SK-N-SH (cell line): ENCODE measurements at regions of chr9 and their contacts with region 1.

Region 1: GRCh38 chr9:109411798-109412352 is 86.2 kb downstream of the PTPN3 start:
- DNase-seq: peak; percentile 44
- H3K4me3 ChIP-seq: no peak overlapping the region
- H3K27ac ChIP-seq: no peak overlapping the region
- H3K4me1 ChIP-seq: no peaks in the 10 kb centered on the region
- H3K27me3 ChIP-seq: no peaks in the 10 kb centered on the region
- CTCF ChIP-seq: peak; percentile 65
- EP300 ChIP-seq: no peak
- RAD21 ChIP-seq: peak; percentile 67

Region 2: DNA sequence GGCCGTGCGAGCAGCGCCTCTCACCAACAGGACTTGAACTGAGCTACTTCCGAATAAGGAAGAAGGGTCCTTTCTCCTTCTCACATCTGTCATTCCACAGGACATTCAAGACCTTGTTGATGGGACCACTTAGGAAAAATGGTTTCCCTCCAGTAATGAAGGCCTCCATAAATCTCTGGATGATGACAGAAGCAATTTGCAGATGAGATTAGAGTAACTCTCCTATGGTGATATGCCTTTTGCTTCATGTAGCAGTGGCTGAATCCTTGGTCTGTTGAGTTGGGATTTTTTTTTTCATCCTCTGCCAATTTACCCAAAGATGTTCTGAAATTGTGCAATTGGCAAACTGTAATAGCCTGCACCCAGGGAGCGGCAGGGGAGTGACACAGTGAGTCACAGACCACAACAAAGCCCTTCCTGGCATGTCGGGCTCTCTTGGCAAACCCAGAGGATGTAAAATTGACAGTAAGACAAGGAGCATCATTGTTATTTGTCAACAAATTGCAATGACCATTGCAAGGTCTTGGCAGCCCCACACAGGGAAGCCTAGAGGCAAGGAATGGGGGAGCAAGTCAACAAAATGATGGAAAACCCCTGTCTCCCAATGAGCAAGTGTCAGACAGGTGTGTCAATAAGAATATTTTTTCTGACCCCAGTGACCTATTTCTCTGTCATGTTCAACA is 832.0 kb before region 1 on chr9:
- CTCF ChIA-PET with region 1: no interaction called
- POLR2A ChIA-PET with region 1: no interaction called
- DNase-seq: no peak
- H3K4me3 ChIP-seq: no peak overlapping the region
- H3K27ac ChIP-seq: no peak overlapping the region
- H3K4me1 ChIP-seq: no peaks in the 10 kb centered on the region
- H3K27me3 ChIP-seq: peaks cover 31% of the 10 kb centered on the region; the same call in 1 of the 2 replicates
- CTCF ChIP-seq: no peak
- EP300 ChIP-seq: no peak
- RAD21 ChIP-seq: no peak

Region 3: DNA sequence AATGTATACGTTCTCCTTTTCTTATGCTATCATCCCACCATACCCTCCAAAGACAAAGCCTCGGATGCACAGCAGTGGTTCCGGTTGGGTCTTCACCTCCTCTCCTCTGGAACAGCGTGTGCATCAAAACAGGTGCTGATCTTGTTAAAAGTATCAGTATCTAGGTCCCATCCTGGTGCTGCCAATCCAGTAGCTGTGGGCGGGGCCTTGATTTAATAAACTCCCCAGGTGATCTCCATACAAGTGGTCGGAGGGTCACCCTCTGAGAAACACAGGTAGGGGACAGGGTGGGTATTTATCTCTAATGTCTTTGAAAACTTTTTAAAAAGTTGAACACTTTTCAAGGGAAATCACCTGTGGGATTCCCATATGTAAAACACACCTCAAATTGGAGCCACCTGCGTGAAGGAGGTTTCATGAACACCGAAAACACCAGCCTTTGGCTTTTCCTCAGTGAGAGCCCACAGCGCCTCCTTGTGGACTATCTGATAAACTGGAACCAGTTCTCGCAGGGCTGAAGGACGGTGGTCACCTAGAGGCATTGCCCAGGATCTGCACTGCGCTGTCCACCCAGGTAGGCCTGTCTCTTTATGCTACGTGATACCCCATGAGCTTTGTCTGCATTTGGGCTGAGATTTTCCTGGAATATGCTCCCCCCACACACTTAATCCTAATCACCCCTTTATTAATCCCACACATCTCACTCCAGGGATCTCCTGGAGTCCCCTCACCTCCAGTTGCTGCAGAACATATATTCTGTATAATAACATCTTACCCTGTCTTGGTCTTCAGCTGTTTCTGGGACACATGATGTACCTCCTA is 10.5 kb before region 1 on chr9:
- CTCF ChIA-PET with region 1: interaction called, 28 read pairs
- POLR2A ChIA-PET with region 1: no interaction called
- DNase-seq: peak; percentile 68
- H3K4me3 ChIP-seq: no peak overlapping the region; a peak in 1 of 4 replicates
- H3K27ac ChIP-seq: no peak overlapping the region
- H3K4me1 ChIP-seq: no peaks in the 10 kb centered on the region
- H3K27me3 ChIP-seq: no peaks in the 10 kb centered on the region
- CTCF ChIP-seq: peak; percentile 84
- EP300 ChIP-seq: no peak
- RAD21 ChIP-seq: peak; percentile 72

Region 4: DNA sequence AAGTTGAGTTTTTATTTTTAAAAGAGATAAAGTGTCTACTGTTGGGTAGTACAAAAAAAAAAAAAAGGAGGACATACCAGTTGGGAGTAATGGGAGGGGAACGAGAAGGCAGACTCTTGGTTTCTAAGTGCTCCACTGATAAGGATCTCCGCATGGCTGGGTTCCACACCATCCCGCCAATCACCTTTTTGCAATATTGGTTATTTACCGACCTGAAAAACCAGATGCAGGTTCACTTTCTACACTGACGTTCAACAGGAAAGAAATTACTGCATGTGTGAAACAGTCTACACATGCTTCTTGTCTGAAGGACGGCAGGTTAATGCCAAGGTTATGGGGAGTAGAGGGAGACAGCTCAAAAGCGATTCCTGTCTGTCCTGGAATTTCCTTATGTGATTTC is 10.8 kb after region 1 on chr9:
- CTCF ChIA-PET with region 1: interaction called, 29 read pairs
- POLR2A ChIA-PET with region 1: no interaction called
- DNase-seq: no peak
- H3K4me3 ChIP-seq: no peak overlapping the region
- H3K27ac ChIP-seq: no peak overlapping the region
- H3K4me1 ChIP-seq: no peaks in the 10 kb centered on the region
- H3K27me3 ChIP-seq: no peaks in the 10 kb centered on the region
- CTCF ChIP-seq: no peak
- EP300 ChIP-seq: no peak
- RAD21 ChIP-seq: no peak